A673 (cell line): ENCODE measurements at regions of chr20 and their contacts with region 1.

Region 1: DNA sequence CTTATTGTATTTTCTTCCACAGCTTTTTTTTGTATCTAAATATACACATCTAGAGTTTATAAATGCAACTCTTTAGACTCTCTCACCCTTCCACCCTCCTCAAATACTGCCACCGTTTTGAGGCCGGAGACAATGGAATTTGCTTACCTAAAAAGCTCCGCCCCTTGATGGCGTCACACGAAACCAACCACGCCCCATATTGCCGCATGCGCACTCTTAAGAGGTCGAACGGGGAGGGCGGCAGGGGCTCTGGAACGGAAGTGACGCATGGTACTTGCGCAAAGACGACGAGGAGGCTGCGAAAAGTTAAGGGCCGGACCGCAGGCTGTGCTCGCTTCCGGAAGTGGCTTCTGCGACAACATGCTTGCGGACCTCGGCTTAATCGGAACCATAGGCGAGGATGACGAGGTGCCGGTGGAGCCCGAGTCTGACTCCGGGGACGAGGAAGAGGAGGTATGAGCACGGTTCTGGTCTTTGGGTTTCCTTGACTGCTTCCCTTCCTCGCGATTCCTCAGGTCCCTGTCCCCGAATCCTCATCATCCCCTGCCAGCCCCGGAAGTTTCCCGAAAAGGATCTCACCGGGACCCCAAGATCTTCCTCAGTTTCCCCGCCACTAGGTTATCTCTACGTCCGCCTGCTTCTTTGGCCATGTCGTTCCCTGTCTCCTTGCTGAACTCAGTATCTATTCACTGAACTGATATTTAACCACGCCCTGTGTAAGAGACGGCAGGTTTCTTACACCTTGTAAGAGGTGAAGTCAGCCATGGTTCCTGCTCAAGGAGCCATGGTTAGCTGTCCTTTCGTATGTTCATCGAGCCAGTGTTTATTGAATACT is at the start of gene DDX27:
- DNase-seq: peak; percentile 99
- H3K4me3 ChIP-seq: peak within 1 kb of the TSS; percentile 75
- H3K27ac ChIP-seq: peak within 1 kb of the TSS; percentile 79
- H3K4me1 ChIP-seq: peaks cover 13% of the 10 kb centered on the region
- H3K27me3 ChIP-seq: no peaks in the 10 kb centered on the region
- CTCF ChIP-seq: no peak
- total RNA-seq, gene DDX27: 62.4 and 62.9 TPM in 2 replicates

Region 2: GRCh38 chr20:48892844-48893243 is 326.5 kb before region 1 on chr20:
- CTCF ChIA-PET with region 1: no interaction called
- POLR2A ChIA-PET with region 1: interaction called, 11 read pairs
- intact Hi-C with region 1: no loop called
- DNase-seq: peak; percentile 86
- H3K4me3 ChIP-seq: no peak overlapping the region
- H3K27ac ChIP-seq: peak overlapping the region; percentile 97
- H3K4me1 ChIP-seq: peaks cover 55% of the 10 kb centered on the region
- H3K27me3 ChIP-seq: no peaks in the 10 kb centered on the region
- CTCF ChIP-seq: no peak

Region 3: DNA sequence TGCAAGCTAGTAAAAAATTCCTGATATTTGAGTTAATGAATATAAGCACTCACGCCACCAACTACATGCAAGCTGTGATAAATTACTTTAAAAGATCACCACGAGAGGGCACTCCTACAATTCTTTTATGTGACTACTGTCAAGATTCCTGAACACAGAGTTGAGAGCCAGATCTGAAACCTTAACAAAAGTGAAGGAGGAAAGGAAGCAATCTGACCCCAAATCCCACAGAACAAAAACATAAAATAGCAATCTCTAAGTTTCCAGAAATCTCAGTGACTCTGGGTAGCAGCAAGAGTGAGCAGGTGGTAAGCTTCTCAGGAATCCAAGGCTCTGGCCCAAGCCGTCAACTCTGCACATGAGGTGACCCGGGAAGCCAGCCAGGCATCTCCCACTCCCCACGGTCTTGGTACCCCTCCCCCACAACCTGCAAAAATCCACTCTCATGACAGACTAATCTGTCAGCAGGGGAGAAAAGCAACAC is 86.3 kb before region 1 on chr20:
- CTCF ChIA-PET with region 1: interaction called, 15 read pairs
- POLR2A ChIA-PET with region 1: interaction called, 3 read pairs
- intact Hi-C with region 1: loop called (anchors 1 kb)
- DNase-seq: peak; percentile 84
- H3K4me3 ChIP-seq: no peak overlapping the region
- H3K27ac ChIP-seq: no peak overlapping the region
- H3K4me1 ChIP-seq: no peaks in the 10 kb centered on the region
- H3K27me3 ChIP-seq: no peaks in the 10 kb centered on the region
- CTCF ChIP-seq: peak; percentile 74

Region 4: GRCh38 chr20:49207076-49207475 is 12.2 kb before region 1 on chr20:
- CTCF ChIA-PET with region 1: interaction called, 10 read pairs
- POLR2A ChIA-PET with region 1: no interaction called
- intact Hi-C with region 1: no loop called
- DNase-seq: peak; percentile 32
- H3K4me3 ChIP-seq: no peak overlapping the region
- H3K27ac ChIP-seq: no peak overlapping the region
- H3K4me1 ChIP-seq: no peaks in the 10 kb centered on the region
- H3K27me3 ChIP-seq: no peaks in the 10 kb centered on the region
- CTCF ChIP-seq: 0 out of 2 replicates have a peak, but pooled peaks have one; percentile 33

Region 5: DNA sequence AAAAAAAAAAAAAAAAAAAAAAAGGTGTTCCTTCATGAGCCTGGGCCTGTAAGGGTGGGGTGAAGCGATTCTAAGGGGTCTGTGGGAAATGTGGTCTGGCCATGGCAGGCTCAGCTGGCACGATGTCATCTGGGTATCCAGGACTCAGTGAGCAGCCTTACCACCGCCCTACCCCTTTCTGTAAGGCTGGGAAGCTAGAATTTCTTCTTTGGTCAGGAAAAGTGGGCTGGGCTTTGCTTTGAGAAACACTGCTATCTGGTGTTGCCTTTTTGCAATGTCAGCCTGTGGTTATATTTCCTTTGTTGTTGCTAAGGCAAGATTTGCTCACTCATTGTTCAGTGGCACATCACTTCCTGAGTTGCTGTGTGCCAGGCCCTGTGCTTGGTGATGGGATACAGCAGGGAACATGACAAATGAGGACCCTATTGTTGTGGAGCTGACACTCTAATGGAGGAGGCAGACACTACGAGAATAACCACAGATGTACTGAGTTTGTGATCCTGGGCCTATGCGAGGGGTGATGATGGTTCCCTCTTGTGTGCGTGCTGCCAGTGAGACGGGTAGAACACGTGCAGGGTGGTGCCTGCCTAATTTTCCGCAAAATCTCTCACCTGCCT is 104.4 kb after region 1 on chr20:
- CTCF ChIA-PET with region 1: no interaction called
- POLR2A ChIA-PET with region 1: interaction called, 13 read pairs
- intact Hi-C with region 1: no loop called
- DNase-seq: peak; percentile 73
- H3K4me3 ChIP-seq: no peak overlapping the region
- H3K27ac ChIP-seq: no peak overlapping the region
- H3K4me1 ChIP-seq: peaks cover 5% of the 10 kb centered on the region
- H3K27me3 ChIP-seq: peaks cover 60% of the 10 kb centered on the region
- CTCF ChIP-seq: peak; percentile 48